Aorta (tissue), 5 donors: ENCODE measurements at regions of chr10 and their contacts with region 1.

Region 1: DNA sequence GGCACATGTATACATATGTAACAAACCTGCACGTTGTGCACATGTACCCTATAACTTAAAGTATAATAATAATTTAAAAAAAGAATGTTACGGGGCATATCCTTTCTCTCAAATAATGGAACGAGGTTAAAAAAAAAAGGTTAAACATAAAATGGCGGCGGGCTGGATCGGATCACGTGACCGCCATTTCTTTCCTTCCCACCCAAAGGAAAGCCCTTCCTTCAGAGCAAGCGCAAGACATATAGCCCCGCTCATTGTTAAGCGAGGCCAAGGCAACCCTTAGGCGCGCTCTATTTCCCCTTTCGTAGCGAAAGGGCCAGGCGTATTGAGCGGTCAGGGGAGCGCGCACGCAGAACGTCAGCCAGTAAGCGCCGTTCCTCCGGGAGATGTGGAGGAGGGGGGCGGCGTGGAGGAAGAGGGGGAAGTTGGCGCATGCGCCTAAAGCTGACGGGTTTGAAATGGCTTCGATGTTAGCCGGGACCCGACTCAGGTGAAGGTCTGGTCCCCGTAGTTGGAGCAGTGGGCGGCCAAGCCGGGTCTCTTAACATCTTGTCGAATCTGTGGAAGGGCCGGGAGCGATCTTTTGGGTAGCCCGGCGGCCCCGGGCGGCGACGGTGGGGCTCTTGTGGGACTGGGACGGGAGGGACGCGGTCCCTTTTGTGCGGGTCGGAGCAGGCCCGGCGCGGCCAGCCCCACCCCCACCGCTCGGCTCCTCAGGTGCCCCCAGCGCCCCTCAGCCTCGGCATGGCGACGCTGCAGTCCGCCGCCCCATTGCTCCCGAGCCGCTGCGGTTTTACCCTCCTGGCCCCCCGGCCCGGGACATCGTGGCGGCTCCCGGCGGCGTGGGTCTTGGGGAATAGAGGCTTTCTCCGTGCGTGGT is at the start of gene CCAR1:
- DNase-seq: peak; percentile 99
- ATAC-seq: peak; percentile 98
- H3K4me3 ChIP-seq: peak within 1 kb of the TSS; percentile 63 to 79
- H3K27ac ChIP-seq: peak within 1 kb of the TSS; percentile 2 to 81
- H3K4me1 ChIP-seq: no peaks in the 10 kb centered on the region
- H3K27me3 ChIP-seq: no peaks in the 10 kb centered on the region
- total RNA-seq, gene CCAR1: 49.4 to 71.1 TPM

Region 2: DNA sequence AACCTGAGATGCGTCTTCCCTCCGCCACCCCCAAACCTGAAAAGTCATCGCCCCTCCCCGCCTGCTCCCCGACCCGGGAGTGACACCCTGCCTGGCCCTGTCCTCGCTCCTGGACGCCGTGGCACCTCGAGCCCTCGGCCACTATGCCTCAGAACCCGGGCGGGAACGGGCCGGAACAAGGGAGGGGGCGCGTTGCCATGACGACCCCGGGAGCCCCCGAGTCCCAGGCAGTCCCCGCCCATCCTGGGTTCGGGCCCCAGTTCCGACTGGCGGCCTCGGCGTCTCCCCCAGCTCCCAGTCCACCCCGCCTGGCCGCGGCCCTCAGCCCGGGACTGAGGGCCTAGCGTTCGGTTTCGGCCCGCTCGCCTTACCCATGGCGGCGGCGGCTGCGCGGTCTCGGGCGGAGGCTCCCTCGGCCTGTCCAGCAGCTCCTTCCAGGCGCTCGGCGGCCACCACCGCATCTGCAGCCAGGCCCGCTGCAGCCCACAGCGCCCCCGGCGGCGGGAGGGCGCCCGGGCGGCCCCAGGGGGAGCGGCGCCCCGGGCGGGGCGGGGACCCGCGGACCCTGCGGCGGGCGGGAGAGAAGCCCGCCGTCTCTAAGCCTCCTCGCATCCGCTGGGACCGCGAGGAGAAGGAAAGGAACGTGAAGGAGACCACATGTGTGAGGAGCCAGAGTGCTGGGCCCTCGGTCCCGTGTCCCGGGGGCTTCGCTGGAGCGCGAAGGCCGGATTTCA is 314.1 kb before region 1 on chr10 and contains the start of gene RUFY2:
- intact Hi-C with region 1: loop called in 1 of 2 experiments (anchors 10 kb)
- DNase-seq: peak; percentile 86 to 93
- ATAC-seq: peak; percentile 98
- H3K4me3 ChIP-seq: peak within 1 kb of the TSS; percentile 96
- H3K27ac ChIP-seq: peak within 1 kb of the TSS; percentile 53 to 87
- H3K4me1 ChIP-seq: no peaks in the 10 kb centered on the region
- H3K27me3 ChIP-seq: no peaks in the 10 kb centered on the region
- total RNA-seq, gene RUFY2: 31.6 to 44.6 TPM

Region 3: DNA sequence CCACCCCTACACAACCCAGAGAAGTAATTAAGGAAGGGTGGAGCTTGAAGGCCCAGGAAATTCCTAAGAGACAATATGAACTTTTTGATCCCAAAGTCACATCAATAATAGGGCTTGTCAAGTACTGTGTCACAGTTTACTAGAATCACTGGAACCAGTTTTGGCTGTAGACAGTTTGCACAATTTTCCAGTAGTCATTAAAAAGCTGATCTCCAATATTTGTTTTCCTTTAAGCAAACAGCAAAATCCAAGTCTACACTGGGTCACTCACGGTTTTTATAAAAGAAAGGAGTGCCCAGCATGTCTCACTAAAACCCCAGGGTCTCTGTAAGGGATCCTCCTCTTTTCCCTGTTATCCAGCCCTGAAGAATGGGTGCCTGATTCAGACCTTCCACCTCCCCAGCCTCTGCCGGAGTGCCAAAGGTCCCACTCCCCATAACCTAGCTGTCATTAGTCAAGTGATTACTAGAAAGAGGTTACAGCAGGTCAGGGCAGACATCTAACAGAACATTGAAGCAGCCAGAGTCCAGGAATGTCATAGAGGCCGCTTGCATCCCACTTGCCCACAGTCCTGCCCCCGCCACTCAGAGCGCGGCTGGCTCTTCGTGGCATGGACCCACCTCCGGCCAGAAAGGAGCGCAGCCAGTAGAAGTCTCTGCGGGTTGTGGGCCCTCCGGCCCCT is 194.3 kb before region 1 on chr10:
- intact Hi-C with region 1: loop called in 1 of 2 experiments (anchors 5 kb)
- DNase-seq: no peak
- ATAC-seq: no peak
- H3K4me3 ChIP-seq: peak overlapping the region; percentile 57 to 64
- H3K27ac ChIP-seq: peak overlapping the region; percentile 3 to 76
- H3K4me1 ChIP-seq: no peaks in the 10 kb centered on the region
- H3K27me3 ChIP-seq: no peaks in the 10 kb centered on the region

Region 4: GRCh38 chr10:68560186-68560942 is 160.7 kb before region 1 on chr10 and contains the start of gene TET1:
- intact Hi-C with region 1: loop called in 1 of 2 experiments (anchors 5 kb)
- DNase-seq: peak in 1 of 2 donors; percentile 50
- ATAC-seq: peak; percentile 73
- H3K4me3 ChIP-seq: peak within 1 kb of the TSS; percentile 76 to 84
- H3K27ac ChIP-seq: no peak within 1 kb of the TSS
- H3K4me1 ChIP-seq: no peaks in the 10 kb centered on the region
- H3K27me3 ChIP-seq: no peaks in the 10 kb centered on the region
- total RNA-seq, gene TET1: 2.2 to 3.6 TPM

Region 5: GRCh38 chr10:68837608-68838322 is 116.7 kb after region 1 on chr10:
- intact Hi-C with region 1: no loop called
- DNase-seq: no peak
- ATAC-seq: no peak
- H3K4me3 ChIP-seq: no peak overlapping the region
- H3K27ac ChIP-seq: no peak overlapping the region
- H3K4me1 ChIP-seq: no peaks in the 10 kb centered on the region
- H3K27me3 ChIP-seq: no peaks in the 10 kb centered on the region